Activated CD8-positive, alpha-beta T cell treated with anti-CD3 and anti-CD28 coated beads for 36 hours (primary cell): ENCODE measurements at regions of chr6 and their contacts with region 1.

Region 1: DNA sequence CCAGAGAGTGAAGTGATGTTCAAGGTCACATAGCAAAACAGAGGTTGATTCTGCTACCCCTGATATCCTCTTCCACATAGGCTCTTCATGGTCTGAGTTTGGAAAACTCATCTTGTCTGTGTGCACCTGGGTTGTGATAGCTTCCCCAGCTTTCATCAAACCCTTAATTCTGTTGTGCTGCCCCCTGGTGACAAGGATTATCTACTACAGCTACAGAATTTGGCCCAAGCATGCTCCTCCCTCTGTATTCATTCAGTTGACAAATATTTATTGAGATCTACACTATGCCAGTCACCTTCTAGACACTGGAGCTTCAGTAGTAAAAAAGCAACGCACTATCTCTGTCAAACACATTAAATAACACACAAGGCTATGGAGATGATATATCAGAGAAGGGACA is 50.4 kb downstream of the SMPDL3A start:
- DNase-seq: peak; percentile 61
- ATAC-seq: peak; percentile 78
- H3K4me3 Mint-ChIP-seq: no peak overlapping the region
- H3K27ac Mint-ChIP-seq: no peak overlapping the region
- H3K4me1 Mint-ChIP-seq: no peaks in the 10 kb centered on the region
- H3K27me3 Mint-ChIP-seq: peaks cover 12% of the 10 kb centered on the region
- CTCF ChIP-seq: peak; percentile 71

Region 2: GRCh38 chr6:122730775-122731386 is 108.6 kb before region 1 on chr6:
- CTCF ChIA-PET with region 1: interaction called, 77 read pairs
- POLR2A ChIA-PET with region 1: no interaction called
- intact Hi-C with region 1: loop called (anchors 2 kb)
- DNase-seq: no peak
- ATAC-seq: peak; percentile 24
- H3K4me3 Mint-ChIP-seq: no peak overlapping the region
- H3K27ac Mint-ChIP-seq: no peak overlapping the region
- H3K4me1 Mint-ChIP-seq: no peaks in the 10 kb centered on the region
- H3K27me3 Mint-ChIP-seq: peaks cover 9% of the 10 kb centered on the region
- CTCF ChIP-seq: peak; percentile 84

Region 3: DNA sequence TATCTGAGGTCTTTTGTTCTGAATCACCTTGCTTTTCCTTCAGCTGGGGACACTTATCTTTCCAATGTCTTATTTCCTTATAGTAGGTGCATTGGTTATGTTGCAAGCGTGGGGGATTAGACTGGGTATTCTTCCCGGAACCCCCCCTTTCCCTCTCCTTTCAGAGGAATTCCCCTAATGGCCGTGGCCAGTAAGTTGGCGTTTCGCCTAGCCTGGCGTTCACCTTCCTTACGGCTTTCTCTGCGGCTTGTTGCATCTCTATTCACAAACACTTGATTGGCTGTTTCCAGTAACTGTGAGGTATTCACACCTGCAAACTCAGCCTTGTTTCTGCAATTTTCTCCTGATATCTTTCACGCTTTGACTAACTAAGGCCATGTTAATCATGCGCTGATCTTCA is 92.8 kb before region 1 on chr6:
- CTCF ChIA-PET with region 1: interaction called, 19 read pairs
- POLR2A ChIA-PET with region 1: no interaction called
- intact Hi-C with region 1: no loop called
- DNase-seq: no peak
- ATAC-seq: no peak
- H3K4me3 Mint-ChIP-seq: no peak overlapping the region
- H3K27ac Mint-ChIP-seq: no peak overlapping the region
- H3K4me1 Mint-ChIP-seq: peaks cover 17% of the 10 kb centered on the region
- H3K27me3 Mint-ChIP-seq: peaks cover 3% of the 10 kb centered on the region
- CTCF ChIP-seq: no peak

Region 4: DNA sequence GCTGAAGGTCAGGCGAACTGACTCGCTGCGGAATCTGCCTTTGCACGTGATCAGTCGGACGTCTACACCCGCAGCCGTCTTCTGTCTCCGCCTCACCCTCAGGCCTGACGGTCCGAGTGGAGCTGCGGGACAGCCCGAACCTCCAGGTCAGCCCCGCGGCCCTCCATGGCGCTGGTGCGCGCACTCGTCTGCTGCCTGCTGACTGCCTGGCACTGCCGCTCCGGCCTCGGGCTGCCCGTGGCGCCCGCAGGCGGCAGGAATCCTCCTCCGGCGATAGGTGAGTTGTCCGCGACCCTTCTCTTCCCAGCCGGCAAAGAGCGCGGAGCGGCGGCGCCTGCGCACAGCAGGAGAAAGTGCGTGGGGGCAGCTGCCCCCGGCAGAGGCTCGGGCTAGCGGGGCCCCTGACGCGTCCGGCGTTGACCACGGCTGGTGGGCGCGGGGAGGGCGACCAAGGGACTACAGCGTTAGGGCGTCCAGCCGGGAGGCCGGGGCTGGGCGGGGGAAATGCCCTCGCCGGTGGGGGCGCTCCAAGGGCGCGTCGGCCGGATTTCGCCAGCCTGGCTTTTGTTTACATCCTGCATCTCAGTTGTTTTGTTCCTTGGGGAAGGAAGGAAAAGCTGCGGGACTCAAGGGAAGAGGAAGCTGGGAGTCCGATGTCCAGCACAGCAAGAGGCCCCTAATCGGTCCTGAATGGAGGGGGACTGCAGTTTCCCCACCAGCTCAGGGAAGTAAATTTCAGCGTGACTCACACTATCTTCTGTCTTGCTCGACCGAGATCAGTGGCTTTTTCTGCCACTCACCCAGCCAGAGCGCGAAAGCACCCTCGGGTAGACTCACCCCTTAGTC is 50.1 kb before region 1 on chr6 and contains the start of gene SMPDL3A:
- CTCF ChIA-PET with region 1: interaction called, 13 read pairs
- POLR2A ChIA-PET with region 1: no interaction called
- intact Hi-C with region 1: no loop called
- DNase-seq: peak; percentile 61
- ATAC-seq: peak; percentile 89
- H3K4me3 Mint-ChIP-seq: peak within 1 kb of the TSS; percentile 77
- H3K27ac Mint-ChIP-seq: peak within 1 kb of the TSS; percentile 64
- H3K4me1 Mint-ChIP-seq: peaks cover 15% of the 10 kb centered on the region
- H3K27me3 Mint-ChIP-seq: peaks cover 51% of the 10 kb centered on the region
- CTCF ChIP-seq: peak; percentile 50
- total RNA-seq, gene SMPDL3A: 0.14 TPM in 1 of 2 experiments, not detected in the other

Region 5: DNA sequence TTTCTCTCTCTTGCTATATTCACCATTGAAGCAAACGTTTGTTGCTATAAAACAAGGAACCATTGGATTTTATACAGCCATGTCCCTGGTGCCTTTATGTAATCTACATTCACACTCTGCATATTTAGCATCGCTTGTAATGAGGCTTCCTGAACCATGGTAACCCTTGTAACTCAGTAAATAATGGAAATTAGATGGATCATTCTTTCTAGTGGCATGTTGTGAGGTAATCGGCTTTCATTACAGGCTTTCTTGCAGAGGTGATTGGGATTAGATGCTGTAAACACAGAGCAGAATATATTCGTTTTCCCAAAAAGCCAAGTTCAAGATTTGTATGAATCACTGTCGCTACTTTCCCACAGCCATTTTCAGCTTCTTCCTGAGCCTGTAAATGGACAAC is 14.3 kb before region 1 on chr6:
- CTCF ChIA-PET with region 1: interaction called, 16 read pairs
- POLR2A ChIA-PET with region 1: no interaction called
- intact Hi-C with region 1: no loop called
- DNase-seq: no peak
- ATAC-seq: no peak
- H3K4me3 Mint-ChIP-seq: no peak overlapping the region
- H3K27ac Mint-ChIP-seq: no peak overlapping the region
- H3K4me1 Mint-ChIP-seq: no peaks in the 10 kb centered on the region
- H3K27me3 Mint-ChIP-seq: peaks cover 4% of the 10 kb centered on the region
- CTCF ChIP-seq: no peak